ENCODE measurements at regions of chr1 and their contacts with region 1.

Region 1: DNA sequence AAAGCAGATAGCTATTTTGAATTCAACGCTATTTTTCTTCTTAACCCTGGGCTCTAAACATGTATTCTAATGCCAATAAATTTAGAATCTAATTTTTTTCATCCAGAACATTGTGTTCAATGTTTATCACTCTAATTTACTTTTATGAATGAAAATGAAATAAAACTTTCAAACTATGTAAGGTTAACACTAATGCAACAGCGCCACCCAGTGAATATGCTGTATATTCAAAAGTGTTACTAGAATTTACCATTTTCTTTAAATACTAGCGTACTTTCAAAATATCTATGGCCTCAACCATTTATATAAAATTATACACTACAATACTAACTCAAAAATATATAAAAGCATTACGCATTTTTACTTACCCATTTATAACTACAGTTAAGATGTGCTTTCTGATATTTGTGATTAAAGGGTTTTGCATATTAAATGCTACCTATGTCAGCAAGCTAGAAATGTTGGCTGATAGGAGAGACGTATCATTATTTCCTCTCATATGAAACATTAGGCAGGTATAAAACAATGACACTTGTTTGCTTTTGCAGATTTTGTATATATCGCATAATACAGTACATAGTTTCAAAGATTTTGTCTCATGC is 5.9 kb upstream of the NUF2 start:
- DNase-seq: no peak
- H3K4me3 ChIP-seq: no peak overlapping the region
- H3K27ac ChIP-seq: no peak overlapping the region
- H3K4me1 ChIP-seq: peaks cover 0 to 7% (median 6%) of the 10 kb centered on the region in 6 donors
- H3K27me3 ChIP-seq: no peaks in the 10 kb centered on the region
- CTCF ChIP-seq: peak in 10 of 11 experiments; percentile 15 to 66 (median 58)
- POLR2A ChIP-seq: no peak

Region 2: GRCh38 chr1:162854245-162854882 is 461.5 kb before region 1 on chr1:
- intact Hi-C with region 1: loop called (anchors 5 kb)
- DNase-seq: no peak
- H3K4me3 ChIP-seq: no peak overlapping the region
- H3K27ac ChIP-seq: no peak overlapping the region
- H3K4me1 ChIP-seq: no peaks in the 10 kb centered on the region
- H3K27me3 ChIP-seq: no peaks in the 10 kb centered on the region
- CTCF ChIP-seq: peak in 9 of 11 experiments; percentile 16 to 66 (median 56)
- POLR2A ChIP-seq: no peak

Region 3: GRCh38 chr1:163071405-163072255 is 244.2 kb before region 1 on chr1:
- intact Hi-C with region 1: loop called (anchors 10 kb)
- DNase-seq: no peak
- H3K4me3 ChIP-seq: no peak overlapping the region
- H3K27ac ChIP-seq: no peak overlapping the region
- H3K4me1 ChIP-seq: no peaks in the 10 kb centered on the region
- H3K27me3 ChIP-seq: peaks cover 0 to 61% (median 16%) of the 10 kb centered on the region in 7 donors
- CTCF ChIP-seq: peak in 8 of 11 experiments; percentile 19 to 63 (median 52)
- POLR2A ChIP-seq: no peak

Region 4: DNA sequence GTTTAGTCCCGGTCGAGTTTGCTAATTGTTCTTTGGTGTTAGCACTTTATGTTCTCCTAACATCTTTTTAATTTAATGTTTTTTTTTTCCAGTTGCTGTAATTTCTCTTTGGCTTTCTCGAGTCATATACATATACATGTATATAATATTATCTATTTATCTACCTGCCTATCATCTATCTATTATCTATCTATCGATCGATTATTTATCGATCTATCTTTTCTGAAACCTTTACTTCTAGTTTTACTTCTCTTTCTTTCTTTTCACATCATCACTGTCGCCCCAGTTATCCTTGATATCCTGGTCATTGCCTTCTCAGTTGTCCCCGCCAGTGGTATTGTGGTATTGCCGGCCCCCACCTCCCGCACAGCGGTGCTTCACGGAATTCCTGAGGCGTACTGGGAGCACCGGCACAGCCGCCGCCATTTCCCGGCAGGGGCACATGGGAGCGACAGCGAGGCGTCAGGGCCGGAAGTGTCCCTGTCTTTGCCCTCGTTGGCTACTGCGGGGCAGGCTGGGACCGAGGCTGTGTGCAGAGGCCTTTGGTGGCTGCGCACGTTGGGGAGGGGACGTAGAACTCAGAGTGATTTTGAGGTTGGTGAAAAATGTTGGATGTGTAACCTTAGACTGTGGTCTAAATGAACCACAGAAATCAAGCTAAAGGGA is 107.0 kb after region 1 on chr1:
- intact Hi-C with region 1: no loop called
- DNase-seq: no peak
- H3K4me3 ChIP-seq: no peak overlapping the region
- H3K27ac ChIP-seq: no peak overlapping the region
- H3K4me1 ChIP-seq: no peaks in the 10 kb centered on the region
- H3K27me3 ChIP-seq: peaks cover 0 to 12% (median 0%) of the 10 kb centered on the region in 7 donors
- CTCF ChIP-seq: no peak
- POLR2A ChIP-seq: no peak